ENCODE measurements at regions of chr10 and their contacts with region 1.

Region 1: GRCh38 chr10:70169649-70170364 is 507 bp downstream of the SAR1A start:
- DNase-seq: peak in 2 of 10 donors; percentile 32 to 79

Region 2: GRCh38 chr10:70146489-70147258 is 23.1 kb before region 1 on chr10 and contains the start of gene TYSND1:
- intact Hi-C with region 1: loop called (anchors 2 kb)
- DNase-seq: peak; percentile 95 to 99 (median 98)

Region 3: GRCh38 chr10:70212879-70213278 is 43.1 kb after region 1 on chr10:
- intact Hi-C with region 1: no loop called
- DNase-seq: no peak